ENCODE measurements at regions of chr15 and their contacts with region 1.

Region 1: DNA sequence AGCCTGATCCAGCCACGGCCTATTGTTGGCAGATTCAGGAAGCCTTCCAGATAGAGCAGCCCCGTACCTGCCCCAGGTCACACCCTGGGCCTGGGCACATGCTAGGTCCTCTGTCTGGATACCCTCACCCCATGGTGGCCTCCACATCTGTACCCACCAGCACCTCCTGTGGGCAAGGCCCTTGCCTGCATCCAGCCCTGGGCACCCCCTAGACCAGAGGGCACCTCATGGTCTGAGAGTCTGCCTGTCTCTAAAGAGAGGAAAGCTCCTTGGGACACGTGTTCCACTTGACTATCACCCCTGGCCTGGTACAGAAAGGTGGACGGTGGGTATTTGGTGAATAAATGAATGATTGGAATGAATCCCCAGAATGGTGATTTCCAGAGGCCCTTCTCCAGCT is 8.9 kb upstream of the COMMD4 start:
- DNase-seq: no peak
- H3K4me3 ChIP-seq: no peak overlapping the region
- H3K27ac ChIP-seq: no peak overlapping the region
- H3K4me1 ChIP-seq: no peaks in the 10 kb centered on the region
- H3K27me3 ChIP-seq: no peaks in the 10 kb centered on the region
- CTCF ChIP-seq: no peak
- POLR2A ChIP-seq: no peak

Region 2: GRCh38 chr15:75229191-75230015 is 97.6 kb before region 1 on chr15:
- intact Hi-C with region 1: loop called (anchors 10 kb)
- DNase-seq: no peak
- H3K4me3 ChIP-seq: no peak overlapping the region
- H3K27ac ChIP-seq: no peak overlapping the region
- H3K4me1 ChIP-seq: no peaks in the 10 kb centered on the region
- H3K27me3 ChIP-seq: no peaks in the 10 kb centered on the region
- CTCF ChIP-seq: no peak
- POLR2A ChIP-seq: no peak